Activated naive CD4-positive, alpha-beta T cell treated with anti-CD3 and anti-CD28 coated beads for 36 hours (primary cell): ENCODE measurements at regions of chr1 and their contacts with region 1.

Region 1: GRCh38 chr1:66282343-66282852 is 251.6 kb upstream of the SGIP1 start:
- DNase-seq: peak; percentile 89
- H3K4me3 Mint-ChIP-seq: peak overlapping the region; percentile 17
- H3K27ac Mint-ChIP-seq: peak overlapping the region; percentile 89
- H3K4me1 Mint-ChIP-seq: peaks cover 87% of the 10 kb centered on the region
- H3K27me3 Mint-ChIP-seq: no peaks in the 10 kb centered on the region

Region 2: DNA sequence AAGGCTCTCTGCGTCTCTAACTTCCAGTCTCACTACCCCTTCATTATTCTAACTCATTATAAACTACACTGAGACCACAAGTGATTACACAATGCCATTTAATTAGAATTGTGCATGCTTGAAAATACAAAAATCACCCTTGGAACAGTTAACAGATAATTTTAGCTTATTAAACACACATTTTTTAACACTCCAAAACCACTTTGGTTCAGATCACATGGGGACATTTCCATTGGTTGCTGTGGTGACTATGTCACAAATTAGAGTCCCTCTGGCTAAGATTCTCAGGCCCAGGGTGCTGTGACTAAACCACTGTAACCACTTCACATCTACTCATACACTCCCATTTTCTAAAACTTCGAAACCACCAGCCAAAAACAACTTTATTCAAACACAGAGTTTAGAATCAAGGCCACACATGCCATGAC is 1359.1 kb before region 1 on chr1:
- CTCF ChIA-PET with region 1: no interaction called
- intact Hi-C with region 1: loop called (anchors 10 kb)
- DNase-seq: peak; percentile 72
- H3K4me3 Mint-ChIP-seq: peak overlapping the region; percentile 25
- H3K27ac Mint-ChIP-seq: peak overlapping the region; percentile 87
- H3K4me1 Mint-ChIP-seq: peaks cover 96% of the 10 kb centered on the region
- H3K27me3 Mint-ChIP-seq: no peaks in the 10 kb centered on the region

Region 3: GRCh38 chr1:66182551-66183178 is 99.7 kb before region 1 on chr1:
- CTCF ChIA-PET with region 1: no interaction called
- intact Hi-C with region 1: loop called (anchors 1 kb)
- DNase-seq: peak; percentile 79
- H3K4me3 Mint-ChIP-seq: no peak overlapping the region
- H3K27ac Mint-ChIP-seq: peak overlapping the region; percentile 13
- H3K4me1 Mint-ChIP-seq: peaks cover 33% of the 10 kb centered on the region
- H3K27me3 Mint-ChIP-seq: no peaks in the 10 kb centered on the region

Region 4: DNA sequence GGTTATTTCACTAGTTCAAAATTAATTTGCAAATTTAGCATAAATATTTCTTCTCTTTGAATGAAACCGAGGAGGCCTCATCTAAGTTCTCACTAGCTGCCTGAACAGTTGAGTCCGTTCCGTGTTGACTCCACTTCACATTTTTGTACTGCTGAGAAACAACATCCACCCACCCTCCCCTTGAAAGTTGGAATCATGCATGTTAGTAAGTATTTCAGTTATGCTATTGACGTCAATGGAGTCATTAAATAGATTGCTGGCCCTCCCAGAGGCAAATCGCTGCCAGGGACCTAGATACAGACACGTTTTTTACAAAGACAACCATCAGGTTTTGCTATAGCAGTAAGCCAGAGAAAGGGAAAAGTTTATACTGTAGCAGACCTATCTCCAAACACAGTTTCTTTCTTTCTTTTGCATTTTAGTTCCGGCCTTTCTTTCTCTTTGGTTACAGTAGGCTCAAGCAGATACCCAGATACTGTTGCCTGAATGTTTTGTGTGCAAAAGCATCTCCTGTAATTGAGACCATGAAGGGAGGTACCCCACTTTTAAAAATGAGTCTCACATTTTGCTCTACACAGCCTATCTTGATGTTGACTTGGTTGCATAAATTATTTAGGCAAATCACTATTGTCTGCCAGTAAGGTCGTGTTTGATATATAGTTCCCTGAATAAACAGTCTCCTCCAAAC is 11.0 kb before region 1 on chr1:
- CTCF ChIA-PET with region 1: interaction called, 5 read pairs
- intact Hi-C with region 1: loop called (anchors 1 kb)
- DNase-seq: peak; percentile 84
- H3K4me3 Mint-ChIP-seq: peak overlapping the region; percentile 54
- H3K27ac Mint-ChIP-seq: peak overlapping the region; percentile 90
- H3K4me1 Mint-ChIP-seq: peaks cover 74% of the 10 kb centered on the region
- H3K27me3 Mint-ChIP-seq: no peaks in the 10 kb centered on the region

Region 5: DNA sequence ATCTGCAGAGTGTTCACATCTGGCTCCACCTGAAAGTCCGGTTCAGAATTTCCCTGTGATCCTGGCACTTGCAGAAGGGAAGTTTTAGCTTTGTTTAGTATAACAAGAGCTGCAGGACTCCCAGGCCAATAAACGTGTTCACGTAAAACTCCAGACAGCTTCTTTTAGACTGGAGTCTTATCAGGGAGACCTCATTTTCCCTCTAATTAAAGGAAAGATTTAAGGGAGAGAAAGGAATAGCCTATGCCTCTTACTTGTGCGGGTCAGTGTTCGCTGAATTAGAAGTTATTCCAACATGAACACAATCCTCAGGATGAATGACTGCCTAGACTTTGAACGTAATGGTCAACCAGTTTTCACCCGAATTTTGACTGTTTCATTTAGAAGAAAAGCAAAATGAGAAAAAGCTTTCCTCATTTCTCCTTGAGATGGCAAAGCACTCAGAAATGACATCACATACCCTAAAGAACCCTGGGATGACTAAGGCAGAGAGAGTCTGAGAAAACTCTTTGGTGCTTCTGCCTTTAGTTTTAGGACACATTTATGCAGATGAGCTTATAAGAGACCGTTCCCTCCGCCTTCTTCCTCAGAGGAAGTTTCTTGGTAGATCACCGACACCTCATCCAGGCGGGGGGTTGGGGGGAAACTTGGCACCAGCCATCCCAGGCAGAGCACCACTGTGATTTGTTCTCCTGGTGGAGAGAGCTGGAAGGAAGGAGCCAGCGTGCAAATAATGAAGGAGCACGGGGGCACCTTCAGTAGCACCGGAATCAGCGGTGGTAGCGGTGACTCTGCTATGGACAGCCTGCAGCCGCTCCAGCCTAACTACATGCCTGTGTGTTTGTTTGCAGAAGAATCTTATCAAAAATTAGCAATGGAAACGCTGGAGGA is 49.5 kb after region 1 on chr1:
- CTCF ChIA-PET with region 1: interaction called, 8 read pairs
- intact Hi-C with region 1: loop called (anchors 1 kb)
- DNase-seq: peak; percentile 76
- H3K4me3 Mint-ChIP-seq: peak overlapping the region; percentile 98
- H3K27ac Mint-ChIP-seq: peak overlapping the region; percentile 95
- H3K4me1 Mint-ChIP-seq: peaks cover 42% of the 10 kb centered on the region
- H3K27me3 Mint-ChIP-seq: no peaks in the 10 kb centered on the region

Region 6: GRCh38 chr1:66436378-66437145 is 154.2 kb after region 1 on chr1:
- CTCF ChIA-PET with region 1: interaction called, 4 read pairs
- intact Hi-C with region 1: loop called (anchors 1 kb)
- DNase-seq: peak; percentile 81
- H3K4me3 Mint-ChIP-seq: no peak overlapping the region
- H3K27ac Mint-ChIP-seq: no peak overlapping the region
- H3K4me1 Mint-ChIP-seq: peaks cover 40% of the 10 kb centered on the region
- H3K27me3 Mint-ChIP-seq: peaks cover 2% of the 10 kb centered on the region

Region 7: DNA sequence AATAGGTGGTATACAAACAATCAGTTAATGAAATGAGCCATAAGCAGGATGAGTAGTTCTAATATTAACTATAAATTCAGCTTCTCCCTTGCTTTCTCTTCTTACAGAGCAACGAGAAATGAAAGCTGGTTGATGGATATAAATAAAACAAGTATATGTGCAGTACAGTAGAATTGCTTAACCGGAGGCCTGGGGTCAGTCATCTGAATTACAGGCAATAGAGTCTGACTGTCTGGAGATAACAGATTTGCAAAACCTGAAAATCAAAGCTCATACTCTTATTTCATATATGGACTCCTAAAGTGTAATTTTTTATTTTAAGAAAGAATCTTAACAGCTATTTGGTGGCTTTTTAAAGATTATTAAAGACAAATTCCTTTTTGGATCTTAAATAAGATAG is 208.4 kb after region 1 on chr1:
- CTCF ChIA-PET with region 1: no interaction called
- intact Hi-C with region 1: no loop called
- DNase-seq: no peak
- H3K4me3 Mint-ChIP-seq: no peak overlapping the region
- H3K27ac Mint-ChIP-seq: no peak overlapping the region
- H3K4me1 Mint-ChIP-seq: no peaks in the 10 kb centered on the region
- H3K27me3 Mint-ChIP-seq: no peaks in the 10 kb centered on the region

Region 8: DNA sequence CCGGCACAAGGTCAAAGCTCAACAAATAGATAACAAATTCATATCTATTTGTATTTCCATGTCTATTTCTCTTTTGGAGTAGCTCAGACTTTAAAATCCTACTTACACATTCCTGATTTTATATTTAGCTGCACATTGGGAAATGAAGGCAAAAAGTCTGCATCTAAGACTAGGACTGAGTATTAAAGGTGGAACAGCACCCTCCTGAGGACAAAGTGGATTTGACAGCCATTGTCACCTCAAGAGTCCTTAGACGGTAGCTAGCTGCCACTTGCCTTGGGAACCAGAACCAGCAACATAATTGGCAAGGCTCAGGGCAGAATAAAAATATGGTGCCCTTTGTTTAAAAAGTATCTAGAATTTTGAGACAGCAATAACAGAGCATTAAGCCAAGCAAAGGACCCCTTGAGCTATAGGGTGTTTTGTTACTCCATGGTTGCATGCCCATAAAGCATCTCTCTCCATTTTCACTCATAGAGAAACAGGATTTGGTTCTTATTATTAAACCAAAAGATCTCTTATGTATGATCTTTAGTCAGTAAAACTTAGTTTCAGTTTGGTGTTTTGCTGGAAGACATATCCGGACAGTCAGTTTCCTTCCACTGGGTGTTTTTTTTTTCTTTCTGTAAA is 221.6 kb after region 1 on chr1:
- CTCF ChIA-PET with region 1: no interaction called
- intact Hi-C with region 1: no loop called
- DNase-seq: peak; percentile 74
- H3K4me3 Mint-ChIP-seq: no peak overlapping the region
- H3K27ac Mint-ChIP-seq: no peak overlapping the region
- H3K4me1 Mint-ChIP-seq: no peaks in the 10 kb centered on the region
- H3K27me3 Mint-ChIP-seq: peaks cover 15% of the 10 kb centered on the region

Region 9: GRCh38 chr1:67174716-67175284 is 892.4 kb after region 1 on chr1:
- CTCF ChIA-PET with region 1: no interaction called
- intact Hi-C with region 1: loop called (anchors 1 kb)
- DNase-seq: peak; percentile 63
- H3K4me3 Mint-ChIP-seq: peak overlapping the region; percentile 7
- H3K27ac Mint-ChIP-seq: peak overlapping the region; percentile 99
- H3K4me1 Mint-ChIP-seq: peaks cover 81% of the 10 kb centered on the region
- H3K27me3 Mint-ChIP-seq: no peaks in the 10 kb centered on the region